Cardiac septum (tissue), 1 donor: ENCODE measurements at regions of chr12 and their contacts with region 1.

Region 1: GRCh38 chr12:89352492-89353187 is at the start of gene DUSP6:
- DNase-seq: peak; percentile 98
- total RNA-seq, gene DUSP6: 28.9 TPM

Region 2: DNA sequence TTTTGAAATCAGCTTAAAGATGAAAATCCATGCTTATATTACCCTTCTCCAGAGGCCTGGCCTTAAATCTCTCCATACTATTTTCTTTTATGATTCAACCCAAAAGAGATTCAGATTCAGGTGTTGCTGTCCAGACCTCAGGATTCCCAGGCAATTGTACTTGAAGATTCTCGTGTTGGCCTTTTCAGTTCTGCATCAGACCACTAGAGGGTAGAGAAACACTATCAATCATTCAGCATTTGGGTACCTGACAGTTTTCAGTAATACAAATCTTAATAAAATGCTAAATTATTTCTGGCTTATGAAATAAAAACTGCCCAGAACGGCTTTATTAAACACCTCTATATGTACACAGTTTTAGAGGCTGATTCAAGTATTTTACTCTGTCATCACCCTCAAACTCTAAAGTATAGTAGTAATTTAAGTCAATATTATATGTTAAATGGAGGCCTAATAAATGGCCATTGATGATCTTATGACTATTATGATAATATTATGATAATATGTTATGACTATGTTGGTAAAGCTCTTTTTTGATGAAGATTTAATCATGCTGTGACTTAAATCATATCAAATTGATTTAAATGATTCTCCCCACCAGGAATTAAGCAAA is 301.5 kb before region 1 on chr12:
- intact Hi-C with region 1: loop called (anchors 5 kb)
- DNase-seq: no peak

Region 3: DNA sequence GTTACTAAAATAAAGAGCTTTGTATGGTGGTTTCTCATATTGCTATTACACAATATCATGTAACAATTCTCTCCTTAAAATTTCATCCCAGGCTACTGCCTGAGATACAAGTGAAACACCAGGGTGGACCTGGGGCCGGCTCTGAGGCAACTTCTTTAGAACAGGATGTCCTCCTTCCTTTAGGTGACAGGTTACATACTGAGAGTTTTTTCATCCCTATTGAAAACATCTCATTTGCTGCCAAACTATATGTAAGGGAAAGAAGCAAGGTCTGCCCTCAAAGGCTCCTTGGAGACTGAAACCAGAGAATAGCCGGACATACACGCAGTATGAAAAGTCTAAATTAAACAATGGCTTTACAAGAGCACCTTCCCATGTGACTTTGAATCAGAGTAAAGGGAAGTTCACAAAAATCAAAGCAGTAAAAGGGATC is 140.3 kb before region 1 on chr12:
- intact Hi-C with region 1: loop called (anchors 5 kb)
- DNase-seq: no peak

Region 4: GRCh38 chr12:89333564-89334252 is 18.9 kb before region 1 on chr12:
- intact Hi-C with region 1: no loop called
- DNase-seq: no peak

Region 5: DNA sequence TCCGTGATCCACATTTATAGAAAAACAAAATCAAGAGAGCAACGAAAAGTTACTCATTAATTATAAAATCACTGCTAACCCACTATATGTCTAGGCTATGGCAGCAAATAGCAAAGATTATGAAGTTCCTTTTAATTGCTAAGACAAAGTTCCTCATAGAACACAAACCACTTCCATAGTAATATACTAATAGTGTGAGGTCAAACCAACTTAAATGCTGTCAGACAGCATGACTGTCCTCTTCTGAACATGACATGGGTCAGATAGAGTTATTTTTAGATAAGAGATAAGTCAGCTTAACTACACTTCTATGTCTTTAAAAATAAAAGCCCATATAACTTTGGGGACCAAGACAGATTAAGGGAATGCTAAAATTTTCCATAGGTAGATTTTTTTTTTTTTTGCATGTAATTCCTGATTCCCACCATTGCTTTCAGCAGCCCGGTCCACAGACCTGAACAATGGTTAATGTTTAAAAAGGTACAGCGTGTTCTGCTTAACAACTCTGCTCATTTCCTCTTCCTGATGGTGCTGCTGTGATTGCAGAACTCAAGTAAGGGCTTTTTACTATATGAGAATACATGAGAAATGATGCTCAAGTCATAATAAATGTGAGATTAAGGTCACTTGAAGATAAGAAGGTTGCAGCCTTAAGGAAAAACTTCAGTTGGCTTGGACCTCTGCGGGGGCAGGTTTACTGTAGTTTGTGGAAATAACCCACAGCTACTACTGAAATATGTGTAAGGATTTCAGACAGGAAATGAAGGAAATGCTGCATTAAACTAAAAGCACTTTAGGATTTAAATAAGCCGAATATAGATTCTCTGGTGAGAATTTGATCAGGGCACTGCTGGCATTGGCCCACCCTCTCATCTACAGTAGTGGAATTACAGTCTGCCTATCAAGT is 37.4 kb after region 1 on chr12:
- intact Hi-C with region 1: loop called (anchors 5 kb)
- DNase-seq: no peak

Region 6: DNA sequence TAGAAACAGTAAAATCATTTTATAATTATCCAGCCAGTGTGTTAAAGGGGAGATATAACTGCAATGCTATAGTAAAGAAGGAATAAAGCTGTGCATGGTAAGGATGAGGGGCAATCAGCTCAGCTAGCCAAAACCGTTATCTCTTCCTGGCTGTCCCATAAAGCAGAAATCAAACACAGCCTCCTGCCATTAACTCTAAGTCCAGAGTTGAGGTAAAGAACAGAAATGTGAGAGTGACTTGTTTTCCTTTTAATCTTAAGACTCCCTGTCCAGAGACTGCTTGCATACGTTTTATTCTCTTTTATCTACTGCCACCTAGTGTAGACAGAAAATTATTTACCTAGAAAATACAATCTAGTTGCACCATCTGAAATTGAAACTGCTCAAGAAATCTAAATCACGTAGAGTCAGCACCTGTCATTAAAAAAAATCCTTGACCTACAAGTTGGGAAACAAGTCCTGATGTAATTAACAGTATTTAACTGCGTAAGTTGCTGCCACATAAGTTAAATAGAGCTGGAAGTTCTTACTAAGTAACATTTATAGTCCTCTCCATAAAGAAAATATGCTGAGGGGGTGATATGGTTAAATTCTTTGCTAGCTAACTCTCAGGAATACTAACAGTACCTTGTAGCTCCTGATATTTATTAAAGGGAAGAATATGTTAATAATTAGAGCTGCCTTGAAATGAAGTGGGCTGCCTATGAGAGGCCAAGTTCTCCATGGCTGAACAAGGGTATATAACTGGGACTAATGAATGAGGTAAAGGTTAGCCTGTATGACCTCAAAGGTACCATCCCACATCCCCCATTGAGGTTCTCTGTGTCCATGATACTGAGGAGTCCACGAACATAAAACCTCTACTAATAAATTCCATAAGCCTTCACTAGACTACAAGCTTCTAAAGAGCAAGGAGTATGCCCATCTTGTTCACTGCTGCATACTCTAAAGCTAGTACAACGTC is 109.3 kb after region 1 on chr12:
- intact Hi-C with region 1: loop called (anchors 1 kb)
- DNase-seq: no peak

Region 7: DNA sequence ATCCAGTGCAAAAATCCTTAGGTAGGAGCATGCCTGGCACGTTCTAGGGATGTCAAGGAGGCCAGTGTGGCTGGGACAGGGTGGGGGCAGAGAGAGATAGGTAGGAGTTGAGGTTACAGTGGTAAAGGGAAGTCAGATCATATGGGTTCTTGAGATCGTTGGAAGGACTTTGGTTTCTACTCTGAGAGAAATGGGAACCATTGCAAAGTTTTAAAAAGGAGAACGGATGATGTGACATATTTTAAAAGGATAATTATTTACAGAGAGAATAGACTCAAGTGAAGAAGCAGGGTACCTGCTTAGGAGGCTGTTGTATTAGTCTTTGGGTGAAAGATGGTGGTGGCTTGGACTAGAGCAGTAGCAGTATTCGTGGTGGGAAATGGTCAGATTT is 403.5 kb after region 1 on chr12:
- intact Hi-C with region 1: no loop called
- DNase-seq: no peak